ENCODE measurements at regions of chr10 and their contacts with region 1.

Region 1: GRCh38 chr10:15169555-15170401 is 1.3 kb upstream of the NMT2 start:
- DNase-seq: no peak
- H3K4me3 Mint-ChIP-seq: no peak overlapping the region
- H3K27ac Mint-ChIP-seq: no peak overlapping the region
- H3K4me1 Mint-ChIP-seq: peaks cover 43% of the 10 kb centered on the region
- H3K27me3 Mint-ChIP-seq: no peaks in the 10 kb centered on the region
- CTCF ChIP-seq: no peak

Region 2: DNA sequence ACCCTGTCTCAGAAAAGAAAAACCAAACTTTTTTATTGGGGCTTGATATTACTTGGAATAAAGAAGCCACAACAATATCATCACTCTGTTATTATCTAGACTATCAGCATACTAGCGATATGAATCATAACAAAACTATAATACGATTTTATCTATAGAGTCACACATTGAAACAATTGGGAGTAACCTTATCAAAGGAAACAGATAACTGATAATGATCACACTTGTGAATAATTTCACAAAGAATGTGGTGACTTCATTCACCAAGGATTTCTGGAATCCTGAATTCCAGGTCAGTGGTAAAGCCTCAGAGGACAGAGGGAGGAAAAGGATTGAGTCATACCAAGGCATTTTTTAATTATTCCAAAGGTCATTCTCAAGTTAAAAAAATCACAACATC is 30.8 kb after region 1 on chr10:
- CTCF ChIA-PET with region 1: interaction called, 4 read pairs
- intact Hi-C with region 1: loop called (anchors 2 kb)
- DNase-seq: peak; percentile 38
- H3K4me3 Mint-ChIP-seq: no peak overlapping the region
- H3K27ac Mint-ChIP-seq: no peak overlapping the region
- H3K4me1 Mint-ChIP-seq: peaks cover 33% of the 10 kb centered on the region
- H3K27me3 Mint-ChIP-seq: peaks cover 11% of the 10 kb centered on the region
- CTCF ChIP-seq: no peak

Region 3: DNA sequence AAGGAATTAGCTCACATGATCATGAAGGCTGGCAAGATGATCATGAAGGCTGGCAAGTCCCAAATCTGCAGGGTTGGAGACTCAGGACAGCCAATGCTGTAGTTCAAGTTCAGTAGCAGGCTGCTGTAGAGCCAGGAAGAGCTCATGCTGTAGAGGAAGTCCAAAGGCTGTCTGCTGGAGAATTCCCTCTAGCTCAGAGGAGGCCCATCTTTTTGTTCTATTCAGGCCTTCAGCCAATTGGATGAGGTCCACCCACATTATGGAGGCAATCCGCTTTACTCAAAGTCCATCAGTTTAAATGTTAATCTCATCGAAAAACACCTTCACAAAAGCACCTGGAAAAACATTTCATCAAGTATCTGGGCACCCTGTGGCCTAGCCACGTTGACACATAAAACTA is 226.2 kb after region 1 on chr10:
- CTCF ChIA-PET with region 1: no interaction called
- intact Hi-C with region 1: no loop called
- DNase-seq: no peak
- H3K4me3 Mint-ChIP-seq: no peak overlapping the region
- H3K27ac Mint-ChIP-seq: no peak overlapping the region
- H3K4me1 Mint-ChIP-seq: no peaks in the 10 kb centered on the region
- H3K27me3 Mint-ChIP-seq: peaks cover 46% of the 10 kb centered on the region
- CTCF ChIP-seq: no peak